GM12878 (cell line): ENCODE measurements at regions of chr2 and their contacts with region 1.

Region 1: DNA sequence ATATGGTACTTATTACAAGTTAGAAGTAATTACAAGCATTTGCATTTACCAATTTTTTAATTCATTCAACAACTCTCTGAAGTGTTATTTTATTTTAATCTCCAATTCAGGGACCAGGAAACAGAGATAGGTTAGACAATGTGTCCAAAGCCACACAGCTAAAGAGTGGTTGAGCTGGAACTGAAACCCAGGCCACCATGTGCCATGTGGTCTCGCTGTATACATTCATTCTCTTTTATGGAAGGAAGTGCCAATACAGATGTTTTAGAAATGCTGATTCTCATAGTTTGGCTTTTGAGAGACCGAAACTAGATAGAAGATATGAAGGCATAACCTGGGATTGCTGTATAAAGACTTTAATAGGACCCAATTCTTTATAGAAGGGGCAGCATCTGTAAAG is 684.6 kb upstream of the ID2 start:
- DNase-seq: no peak
- ATAC-seq: peak; percentile 76
- H3K4me3 ChIP-seq: no peak overlapping the region
- H3K27ac ChIP-seq: no peak overlapping the region
- H3K4me1 ChIP-seq: peaks cover 11% of the 10 kb centered on the region; the same call in 1 of the 2 replicates
- H3K27me3 ChIP-seq: no peaks in the 10 kb centered on the region
- CTCF ChIP-seq: no peak
- EP300 ChIP-seq: 0 out of 4 replicates have a peak, but pooled peaks of 1 of the 2 experiments have one; percentile 16
- POLR2A ChIP-seq: no peak
- RAD21 ChIP-seq: no peak

Region 2: GRCh38 chr2:7984693-7985353 is 12.5 kb before region 1 on chr2:
- CTCF ChIA-PET with region 1: interaction called, 6 read pairs
- POLR2A ChIA-PET with region 1: interaction called, 4 read pairs
- RAD21 ChIA-PET with region 1: interaction called, 9 read pairs
- SMC1A ChIA-PET with region 1: interaction called, 15 read pairs
- in situ Hi-C with region 1: no loop called
- intact Hi-C with region 1: no loop called
- DNase-seq: no peak
- ATAC-seq: peak; percentile 92
- H3K4me3 ChIP-seq: no peak overlapping the region
- H3K27ac ChIP-seq: no peak overlapping the region
- H3K4me1 ChIP-seq: peaks cover 11% of the 10 kb centered on the region
- H3K27me3 ChIP-seq: no peaks in the 10 kb centered on the region
- CTCF ChIP-seq: no peak
- EP300 ChIP-seq: peak; percentile 11 to 39; a peak in 2 of 4 replicates
- POLR2A ChIP-seq: no peak
- RAD21 ChIP-seq: no peak

Region 3: GRCh38 chr2:8836971-8837794 is 839.9 kb after region 1 on chr2 and contains the start of gene KIDINS220:
- CTCF ChIA-PET with region 1: no interaction called
- POLR2A ChIA-PET with region 1: no interaction called
- RAD21 ChIA-PET with region 1: no interaction called
- SMC1A ChIA-PET with region 1: no interaction called
- in situ Hi-C with region 1: no loop called
- intact Hi-C with region 1: no loop called
- DNase-seq: peak; percentile 43
- ATAC-seq: peak; percentile 94
- H3K4me3 ChIP-seq: peak within 1 kb of the TSS; percentile 98
- H3K27ac ChIP-seq: no peak within 1 kb of the TSS
- H3K4me1 ChIP-seq: no peaks in the 10 kb centered on the region
- H3K27me3 ChIP-seq: no peaks in the 10 kb centered on the region
- CTCF ChIP-seq: no peak
- EP300 ChIP-seq: no peak
- POLR2A ChIP-seq: peak; percentile 98
- RAD21 ChIP-seq: no peak
- polyA plus RNA-seq, gene KIDINS220: 6.0 to 8.0 TPM